ENCODE measurements at regions of chr5 and their contacts with region 1.

Region 1: GRCh38 chr5:38463634-38464521 is 92.6 kb downstream of the LIFR start:
- DNase-seq: peak in 6 of 7 donors; percentile 47 to 69 (median 48)
- H3K4me3 ChIP-seq: no peak overlapping the region
- H3K27ac ChIP-seq: peak overlapping the region in 3 of 5 donors; percentile 19 to 97 (median 45)
- H3K4me1 ChIP-seq: peaks cover 0 to 40% of the 10 kb centered on the region in 2 donors
- H3K27me3 ChIP-seq: no peaks in the 10 kb centered on the region
- CTCF ChIP-seq: no peak
- POLR2A ChIP-seq: no peak

Region 2: GRCh38 chr5:38666668-38667498 is 203.0 kb after region 1 on chr5:
- intact Hi-C with region 1: loop called in 1 of 2 experiments (anchors 10 kb)
- DNase-seq: peak; percentile 20 to 74 (median 32)
- H3K4me3 ChIP-seq: no peak overlapping the region
- H3K27ac ChIP-seq: peak overlapping the region in 1 of 5 donors; percentile 55
- H3K4me1 ChIP-seq: peaks cover 4 to 13% of the 10 kb centered on the region in 2 donors
- H3K27me3 ChIP-seq: no peaks in the 10 kb centered on the region
- CTCF ChIP-seq: peak; percentile 25 to 69 (median 44)
- POLR2A ChIP-seq: no peak

Region 3: GRCh38 chr5:38871790-38872551 is 408.1 kb after region 1 on chr5:
- intact Hi-C with region 1: no loop called
- DNase-seq: peak in 2 of 7 donors; percentile 32 to 40
- H3K4me3 ChIP-seq: no peak overlapping the region
- H3K27ac ChIP-seq: peak overlapping the region in 3 of 5 donors; percentile 29 to 64 (median 63)
- H3K4me1 ChIP-seq: peaks cover 19 to 29% of the 10 kb centered on the region in 2 donors
- H3K27me3 ChIP-seq: no peaks in the 10 kb centered on the region
- CTCF ChIP-seq: no peak
- POLR2A ChIP-seq: peak in 1 of 2 donors; percentile 65

Region 4: GRCh38 chr5:39058178-39058921 is 594.5 kb after region 1 on chr5:
- intact Hi-C with region 1: no loop called
- DNase-seq: no peak
- H3K4me3 ChIP-seq: peak overlapping the region in 1 of 4 donors; percentile 51
- H3K27ac ChIP-seq: peak overlapping the region in 1 of 5 donors; percentile 25
- H3K4me1 ChIP-seq: peaks cover 28 to 37% of the 10 kb centered on the region in 2 donors
- H3K27me3 ChIP-seq: no peaks in the 10 kb centered on the region
- CTCF ChIP-seq: no peak
- POLR2A ChIP-seq: no peak

Measured in adrenal gland (tissue), 19 donors.